ENCODE measurements at regions of chr5 and their contacts with region 1.

Region 1: DNA sequence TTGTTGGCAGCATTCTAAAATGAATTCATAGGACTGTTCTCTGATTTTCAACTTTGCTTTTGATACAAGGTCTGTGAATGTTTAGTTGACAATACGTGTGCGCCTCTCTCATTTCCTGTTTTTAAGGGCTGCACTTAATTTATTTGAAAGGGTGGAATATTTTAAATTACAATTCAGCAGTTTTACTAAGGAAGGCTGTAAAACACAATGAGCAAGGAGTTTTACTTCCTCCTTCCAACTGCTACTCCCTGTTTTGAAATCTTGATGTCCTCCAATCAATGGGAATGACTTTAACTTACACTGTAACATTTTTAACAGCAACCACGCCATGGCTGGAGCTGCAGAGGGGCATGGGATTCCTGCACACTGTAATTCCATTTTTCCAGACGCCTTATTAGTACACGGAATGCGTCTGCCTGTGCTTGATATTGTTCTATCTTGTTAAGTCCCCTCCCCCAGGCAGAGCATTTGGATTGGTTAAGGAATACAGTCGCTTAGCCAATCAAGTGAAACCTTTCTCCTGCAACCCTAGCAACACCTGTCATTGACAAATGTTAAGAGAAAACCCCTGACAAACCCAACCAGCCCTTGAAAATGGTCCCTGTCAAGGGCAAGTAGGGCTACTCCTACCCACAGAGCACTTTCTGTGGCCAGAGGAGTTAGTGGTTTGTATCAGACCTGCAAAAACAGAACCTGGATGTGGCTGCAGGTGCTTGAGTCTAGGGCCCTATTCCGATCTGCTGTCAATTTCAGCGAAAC is 12.5 kb upstream of the ZSWIM6 start:
- DNase-seq: peak in 1 of 7 donors; percentile 26
- H3K4me3 ChIP-seq: no peak overlapping the region
- H3K27ac ChIP-seq: peak overlapping the region in 4 of 5 donors; percentile 18 to 76 (median 36)
- H3K4me1 ChIP-seq: peaks cover 0 to 27% of the 10 kb centered on the region in 2 donors
- H3K27me3 ChIP-seq: no peaks in the 10 kb centered on the region
- CTCF ChIP-seq: no peak
- POLR2A ChIP-seq: no peak

Region 2: DNA sequence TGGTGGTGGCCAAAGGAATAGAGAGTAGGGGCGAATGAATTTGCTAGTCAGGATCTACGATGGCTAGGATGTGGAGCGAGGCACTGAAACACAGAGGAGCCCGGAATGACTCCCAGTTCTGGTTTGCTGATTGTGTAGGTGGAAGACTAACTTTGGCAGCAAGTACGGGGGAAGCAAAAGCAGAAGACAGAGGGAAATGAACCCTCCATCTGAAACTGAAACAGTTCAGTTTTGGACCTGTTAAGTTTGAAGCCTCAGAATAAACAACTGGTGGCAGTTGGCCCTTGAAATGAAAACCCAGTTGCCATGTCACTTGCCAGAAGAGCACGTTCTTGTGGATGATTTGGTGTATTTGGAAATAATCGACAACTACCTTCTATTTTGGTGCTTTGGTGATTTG is 141.9 kb before region 1 on chr5:
- intact Hi-C with region 1: loop called in 1 of 2 experiments (anchors 10 kb)
- DNase-seq: no peak
- H3K4me3 ChIP-seq: no peak overlapping the region
- H3K27ac ChIP-seq: no peak overlapping the region
- H3K4me1 ChIP-seq: no peaks in the 10 kb centered on the region
- H3K27me3 ChIP-seq: no peaks in the 10 kb centered on the region
- CTCF ChIP-seq: no peak
- POLR2A ChIP-seq: no peak

Region 3: DNA sequence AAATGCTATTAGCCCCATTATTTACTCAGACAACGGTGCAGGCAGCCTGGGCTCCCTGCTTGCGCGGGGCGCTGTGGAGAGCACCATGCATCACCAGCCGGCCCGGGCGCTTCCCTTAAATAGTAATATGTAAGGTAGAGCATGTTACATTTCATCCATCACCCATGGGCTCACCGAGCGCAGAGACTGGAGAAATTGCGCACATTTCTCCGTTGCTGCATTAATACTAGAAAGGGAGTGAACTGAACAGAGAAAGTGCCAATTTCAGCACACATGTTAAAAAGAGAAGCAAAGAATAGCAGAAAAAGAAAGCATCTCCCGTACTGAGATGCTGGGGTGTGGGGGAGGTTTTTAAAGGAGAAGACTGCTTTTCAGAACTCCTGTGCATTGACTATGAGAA is 412.8 kb after region 1 on chr5:
- intact Hi-C with region 1: no loop called
- DNase-seq: peak in 2 of 7 donors; percentile 11 to 19
- H3K4me3 ChIP-seq: no peak overlapping the region
- H3K27ac ChIP-seq: peak overlapping the region in 1 of 5 donors; percentile 18
- H3K4me1 ChIP-seq: peaks cover 0 to 16% of the 10 kb centered on the region in 2 donors
- H3K27me3 ChIP-seq: no peaks in the 10 kb centered on the region
- CTCF ChIP-seq: no peak
- POLR2A ChIP-seq: no peak

Measured in adrenal gland (tissue), 19 donors.